Endothelial cell of umbilical vein (primary cell): ENCODE measurements at regions of chr1 and their contacts with region 1.

Region 1: DNA sequence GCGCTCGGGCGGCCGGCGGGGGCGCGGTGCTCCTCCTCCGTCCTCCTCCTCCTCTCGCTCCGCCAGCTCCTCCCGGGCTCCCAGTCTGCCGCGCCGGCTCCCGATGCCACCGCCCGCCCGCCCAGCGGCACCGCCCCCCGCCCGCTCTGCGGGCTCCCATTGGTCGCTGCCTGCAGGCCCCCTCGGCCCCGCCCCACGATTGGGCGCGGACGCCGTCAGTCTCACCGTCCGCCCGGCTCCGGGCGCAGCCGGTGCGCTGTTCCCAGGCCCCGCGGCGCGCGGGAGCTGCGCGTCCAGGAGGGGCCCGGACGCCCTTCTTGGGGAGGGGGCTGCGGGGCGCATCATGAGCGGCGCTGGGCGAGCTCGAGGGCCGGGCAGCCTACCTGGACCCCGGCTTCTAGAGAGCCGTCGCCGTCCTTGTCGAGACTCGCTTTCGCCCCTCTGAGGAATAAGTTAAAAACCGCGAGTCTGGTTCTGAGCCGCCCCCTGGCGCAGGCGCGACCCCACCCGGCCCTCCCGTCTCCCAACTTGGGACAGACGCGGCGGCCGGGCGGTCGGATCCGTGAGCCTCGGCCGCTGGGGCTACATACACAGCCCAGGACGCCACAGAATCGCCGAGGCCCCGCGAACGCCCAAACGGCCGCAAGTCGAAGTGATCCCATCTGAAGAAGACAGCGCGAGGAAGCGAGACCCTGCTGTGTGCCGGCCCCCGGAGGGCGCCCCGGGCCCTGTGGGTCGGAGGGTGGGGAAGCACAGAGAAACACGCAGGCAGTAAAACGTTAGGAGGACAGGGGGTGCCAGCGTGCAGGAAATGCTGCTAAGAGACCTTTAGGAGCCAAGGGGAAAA is at the start of gene SIPA1L2:
- DNase-seq: peak; percentile 93
- H3K4me3 ChIP-seq: peak within 1 kb of the TSS; percentile 83 to 88 (median 84)
- H3K27ac ChIP-seq: peak within 1 kb of the TSS; percentile 21
- H3K4me1 ChIP-seq: peaks cover 16% of the 10 kb centered on the region
- H3K27me3 ChIP-seq: no peaks in the 10 kb centered on the region
- CTCF ChIP-seq: peak; percentile 16 to 38
- POLR2A ChIP-seq: no peak
- total RNA-seq, gene SIPA1L2: 12.8 and 14.2 TPM in 2 replicates

Region 2: DNA sequence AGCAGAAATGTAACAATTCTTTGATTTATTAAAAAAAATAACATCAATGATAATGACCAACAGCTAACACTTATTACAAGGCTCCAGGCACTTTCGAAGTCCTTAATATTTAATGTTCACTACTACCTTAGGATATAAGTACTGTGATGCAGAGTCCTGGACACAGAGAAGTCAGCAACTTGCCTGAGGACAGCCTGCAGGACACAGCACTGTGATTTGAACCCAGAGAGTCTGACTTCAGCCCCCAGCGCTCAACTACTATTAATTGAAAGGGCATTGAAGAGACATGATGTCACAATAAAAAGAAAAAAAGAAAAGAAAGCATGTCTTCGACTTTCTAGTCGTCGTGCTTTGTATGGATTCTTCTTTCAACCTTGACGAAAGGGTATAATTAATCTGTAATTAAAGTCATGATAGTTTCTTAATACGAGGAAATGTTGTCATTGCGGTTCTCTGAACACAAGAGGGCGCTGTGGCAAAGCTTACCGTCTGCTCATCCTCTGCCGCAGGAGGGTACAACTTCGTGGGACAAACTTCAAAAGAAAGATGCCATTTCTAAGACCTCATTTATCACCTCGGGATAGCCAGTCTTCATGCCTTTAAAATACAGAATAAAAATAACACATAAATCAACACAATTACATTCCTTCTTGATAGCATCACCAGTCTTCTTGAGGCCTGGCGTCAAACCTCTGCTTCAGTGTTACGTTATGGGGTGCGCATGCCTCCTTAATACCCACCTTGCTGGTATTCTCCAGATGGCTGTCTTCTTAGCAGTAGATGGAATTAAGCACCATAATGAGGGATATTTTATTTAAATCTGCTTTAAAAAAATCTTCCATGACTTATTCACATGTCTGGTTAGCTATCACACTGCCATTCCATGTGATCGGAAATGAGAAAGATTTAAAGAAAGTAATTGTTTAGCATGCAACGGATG is 763.6 kb before region 1 on chr1:
- CTCF ChIA-PET with region 1: interaction called, 31 read pairs
- POLR2A ChIA-PET with region 1: no interaction called
- dilution Hi-C with region 1: no loop called
- intact Hi-C with region 1: loop called (anchors 1 kb)
- DNase-seq: peak; percentile 71
- H3K4me3 ChIP-seq: no peak overlapping the region
- H3K27ac ChIP-seq: no peak overlapping the region
- H3K4me1 ChIP-seq: no peaks in the 10 kb centered on the region
- H3K27me3 ChIP-seq: no peaks in the 10 kb centered on the region
- CTCF ChIP-seq: peak; percentile 73 to 77
- POLR2A ChIP-seq: no peak

Region 3: DNA sequence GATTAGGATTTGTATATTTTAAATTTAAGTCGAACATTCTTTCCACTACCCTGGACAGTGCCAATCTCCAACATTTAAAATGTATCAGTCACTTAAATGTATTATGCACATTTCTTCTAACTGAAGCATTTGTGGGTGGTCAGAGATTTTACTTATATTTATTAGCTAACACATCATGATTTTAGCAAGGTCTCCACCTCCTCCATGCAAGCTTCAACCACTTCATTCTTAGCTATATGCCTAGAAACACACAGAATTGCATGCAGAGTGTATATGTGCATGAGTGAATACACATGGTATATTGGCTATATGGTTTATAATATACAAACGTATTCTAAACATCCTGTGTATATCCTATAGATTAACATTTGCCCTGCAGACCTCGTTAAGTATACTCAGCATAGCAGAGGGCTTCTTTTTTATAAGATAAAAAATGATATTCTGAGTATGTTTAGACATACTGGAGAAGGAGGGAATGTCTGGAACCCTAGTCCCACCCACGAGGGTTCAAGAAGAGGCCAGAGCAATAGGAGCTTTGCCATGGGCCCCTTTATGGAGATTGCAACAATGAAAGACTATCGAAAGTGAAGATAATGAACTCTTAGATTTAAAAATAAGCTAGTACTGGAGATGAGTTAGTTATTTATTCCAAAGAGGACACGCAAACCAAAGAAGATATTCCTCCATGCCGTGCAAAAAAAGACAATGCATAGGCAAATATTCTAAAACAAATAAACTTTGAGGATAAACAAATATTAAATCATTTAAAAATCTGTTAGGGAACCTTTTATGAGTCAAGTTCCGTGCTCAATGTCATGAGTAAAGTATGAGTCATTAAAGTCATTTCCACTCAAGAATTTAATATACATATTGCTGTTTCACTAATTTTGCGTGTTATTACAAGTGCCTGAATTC is 480.7 kb before region 1 on chr1:
- CTCF ChIA-PET with region 1: no interaction called
- POLR2A ChIA-PET with region 1: no interaction called
- dilution Hi-C with region 1: no loop called
- intact Hi-C with region 1: loop called (anchors 10 kb)
- DNase-seq: peak; percentile 81
- H3K4me3 ChIP-seq: peak overlapping the region in 1 of 3 experiments; percentile 13
- H3K27ac ChIP-seq: peak overlapping the region; percentile 45
- H3K4me1 ChIP-seq: peaks cover 22% of the 10 kb centered on the region
- H3K27me3 ChIP-seq: no peaks in the 10 kb centered on the region
- CTCF ChIP-seq: no peak
- POLR2A ChIP-seq: no peak

Region 4: GRCh38 chr1:232428786-232429530 is 201.3 kb before region 1 on chr1:
- CTCF ChIA-PET with region 1: no interaction called
- POLR2A ChIA-PET with region 1: no interaction called
- dilution Hi-C with region 1: no loop called
- intact Hi-C with region 1: loop called (anchors 10 kb)
- DNase-seq: no peak
- H3K4me3 ChIP-seq: no peak overlapping the region
- H3K27ac ChIP-seq: no peak overlapping the region
- H3K4me1 ChIP-seq: no peaks in the 10 kb centered on the region
- H3K27me3 ChIP-seq: no peaks in the 10 kb centered on the region
- CTCF ChIP-seq: no peak
- POLR2A ChIP-seq: no peak

Region 5: GRCh38 chr1:232578651-232579195 is 51.5 kb before region 1 on chr1:
- CTCF ChIA-PET with region 1: interaction called, 3 read pairs
- POLR2A ChIA-PET with region 1: no interaction called
- dilution Hi-C with region 1: no loop called
- intact Hi-C with region 1: loop called (anchors 5 kb)
- DNase-seq: peak; percentile 65
- H3K4me3 ChIP-seq: no peak overlapping the region
- H3K27ac ChIP-seq: peak overlapping the region; percentile 57
- H3K4me1 ChIP-seq: peaks cover 21% of the 10 kb centered on the region
- H3K27me3 ChIP-seq: no peaks in the 10 kb centered on the region
- CTCF ChIP-seq: no peak
- POLR2A ChIP-seq: no peak

Region 6: DNA sequence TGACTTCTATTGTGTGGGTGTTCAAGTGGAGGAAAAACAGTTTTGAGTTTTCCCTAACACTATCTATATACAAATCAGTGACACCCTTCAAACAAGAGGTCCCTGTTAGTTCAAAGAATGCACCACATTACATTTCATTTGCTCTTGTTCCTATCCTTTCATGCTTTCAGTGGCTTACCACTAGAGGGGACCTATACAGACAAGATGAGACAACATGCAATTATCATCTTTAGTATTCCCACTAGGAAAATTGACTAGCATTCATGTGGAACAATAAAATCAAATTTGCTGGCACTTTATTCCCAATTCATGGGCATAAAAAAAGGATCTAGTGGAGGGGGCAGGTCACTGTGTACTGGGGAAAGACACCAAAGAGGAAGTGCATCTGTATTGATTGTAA is 13.0 kb after region 1 on chr1:
- CTCF ChIA-PET with region 1: no interaction called
- POLR2A ChIA-PET with region 1: no interaction called
- dilution Hi-C with region 1: no loop called
- intact Hi-C with region 1: no loop called
- DNase-seq: no peak
- H3K4me3 ChIP-seq: no peak overlapping the region
- H3K27ac ChIP-seq: no peak overlapping the region
- H3K4me1 ChIP-seq: no peaks in the 10 kb centered on the region
- H3K27me3 ChIP-seq: no peaks in the 10 kb centered on the region
- CTCF ChIP-seq: no peak
- POLR2A ChIP-seq: no peak

Region 7: GRCh38 chr1:232737917-232738316 is 107.6 kb after region 1 on chr1:
- CTCF ChIA-PET with region 1: no interaction called
- POLR2A ChIA-PET with region 1: no interaction called
- dilution Hi-C with region 1: no loop called
- intact Hi-C with region 1: no loop called
- DNase-seq: no peak
- H3K4me3 ChIP-seq: no peak overlapping the region
- H3K27ac ChIP-seq: no peak overlapping the region
- H3K4me1 ChIP-seq: no peaks in the 10 kb centered on the region
- H3K27me3 ChIP-seq: no peaks in the 10 kb centered on the region
- CTCF ChIP-seq: no peak
- POLR2A ChIP-seq: no peak

Region 8: GRCh38 chr1:233113009-233113879 is 483.0 kb after region 1 on chr1:
- CTCF ChIA-PET with region 1: interaction called, 5 read pairs
- POLR2A ChIA-PET with region 1: no interaction called
- dilution Hi-C with region 1: no loop called
- intact Hi-C with region 1: loop called (anchors 1 kb)
- DNase-seq: peak; percentile 89
- H3K4me3 ChIP-seq: peak overlapping the region in 1 of 3 experiments; percentile 6
- H3K27ac ChIP-seq: peak overlapping the region; percentile 89
- H3K4me1 ChIP-seq: peaks cover 32% of the 10 kb centered on the region
- H3K27me3 ChIP-seq: no peaks in the 10 kb centered on the region
- CTCF ChIP-seq: no peak
- POLR2A ChIP-seq: no peak